PC-3 (cell line): ENCODE measurements at regions of chr1 and their contacts with region 1.

Region 1: DNA sequence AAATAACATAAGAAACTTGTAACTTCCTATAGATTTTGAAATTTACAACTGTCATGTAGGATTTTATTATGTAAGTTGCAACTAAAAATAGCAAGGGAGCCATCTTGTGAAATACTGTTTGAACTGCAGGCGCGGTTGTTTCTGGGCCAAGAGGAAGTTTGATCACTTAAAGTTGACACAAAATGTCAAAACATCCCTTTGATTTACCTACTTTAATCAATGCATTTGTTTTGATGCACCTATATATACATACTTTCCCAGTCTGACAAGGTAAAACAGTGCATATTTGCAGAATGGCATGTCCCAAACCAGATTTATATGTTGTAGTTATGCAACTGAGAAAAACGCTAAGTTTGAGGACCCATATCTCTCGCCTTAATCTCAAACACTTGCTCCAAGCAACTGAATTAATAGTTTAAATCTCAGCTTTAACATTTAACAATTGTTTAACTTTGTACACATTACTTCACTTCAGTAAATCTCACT is 63.8 kb downstream of the KCNK2 start:
- DNase-seq: peak; percentile 82
- ATAC-seq: peak; percentile 64
- H3K4me3 ChIP-seq: peak overlapping the region; percentile 5; the same call in 1 of the 2 replicates
- H3K27ac ChIP-seq: no peak overlapping the region
- H3K4me1 ChIP-seq: peaks cover 21% of the 10 kb centered on the region
- H3K27me3 ChIP-seq: no peaks in the 10 kb centered on the region
- CTCF ChIP-seq: peak; percentile 98

Region 2: DNA sequence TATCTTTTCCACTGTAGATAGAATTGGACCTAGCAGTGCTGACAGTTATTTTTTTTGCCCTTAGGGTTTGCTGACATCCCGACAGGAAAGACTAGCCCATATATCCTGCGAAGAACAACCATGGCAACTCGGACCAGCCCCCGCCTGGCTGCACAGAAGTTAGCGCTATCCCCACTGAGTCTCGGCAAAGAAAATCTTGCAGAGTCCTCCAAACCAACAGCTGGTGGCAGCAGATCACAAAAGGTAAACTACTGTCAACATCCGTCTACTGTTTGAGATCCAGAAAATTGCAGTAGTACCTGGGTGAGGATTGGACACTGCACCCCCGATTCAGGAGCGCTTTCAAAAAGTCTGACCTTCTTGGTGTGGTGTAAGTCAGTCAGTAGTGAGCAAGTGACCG is 487.6 kb before region 1 on chr1:
- CTCF ChIA-PET with region 1: interaction called, 4 read pairs
- POLR2A ChIA-PET with region 1: no interaction called
- intact Hi-C with region 1: loop called (anchors 1 kb)
- DNase-seq: peak; percentile 46
- ATAC-seq: peak; percentile 70
- H3K4me3 ChIP-seq: no peak overlapping the region
- H3K27ac ChIP-seq: no peak overlapping the region
- H3K4me1 ChIP-seq: no peaks in the 10 kb centered on the region
- H3K27me3 ChIP-seq: no peaks in the 10 kb centered on the region
- CTCF ChIP-seq: peak; percentile 65

Region 3: GRCh38 chr1:214901718-214902117 is 244.7 kb before region 1 on chr1:
- CTCF ChIA-PET with region 1: interaction called, 3 read pairs
- POLR2A ChIA-PET with region 1: no interaction called
- intact Hi-C with region 1: loop called (anchors 2 kb)
- DNase-seq: peak; percentile 99
- ATAC-seq: peak; percentile 85
- H3K4me3 ChIP-seq: peak overlapping the region; percentile 48
- H3K27ac ChIP-seq: peak overlapping the region; percentile 88
- H3K4me1 ChIP-seq: peaks cover 44% of the 10 kb centered on the region
- H3K27me3 ChIP-seq: no peaks in the 10 kb centered on the region
- CTCF ChIP-seq: no peak; the same call in 1 of the 2 replicates

Region 4: GRCh38 chr1:215076318-215076717 is 70.1 kb before region 1 on chr1:
- CTCF ChIA-PET with region 1: no interaction called
- POLR2A ChIA-PET with region 1: no interaction called
- intact Hi-C with region 1: loop called (anchors 5 kb)
- DNase-seq: peak; percentile 80
- ATAC-seq: peak; percentile 96
- H3K4me3 ChIP-seq: no peak overlapping the region
- H3K27ac ChIP-seq: no peak overlapping the region
- H3K4me1 ChIP-seq: no peaks in the 10 kb centered on the region
- H3K27me3 ChIP-seq: no peaks in the 10 kb centered on the region
- CTCF ChIP-seq: peak; percentile 91

Region 5: GRCh38 chr1:215114154-215114933 is 32.0 kb before region 1 on chr1:
- CTCF ChIA-PET with region 1: no interaction called
- POLR2A ChIA-PET with region 1: no interaction called
- intact Hi-C with region 1: no loop called
- DNase-seq: peak; percentile 98
- ATAC-seq: peak; percentile 84
- H3K4me3 ChIP-seq: peak overlapping the region; percentile 20; the same call in 1 of the 2 replicates
- H3K27ac ChIP-seq: peak overlapping the region; percentile 74
- H3K4me1 ChIP-seq: peaks cover 25% of the 10 kb centered on the region
- H3K27me3 ChIP-seq: no peaks in the 10 kb centered on the region
- CTCF ChIP-seq: no peak

Region 6: GRCh38 chr1:215526553-215527151 is 380.3 kb after region 1 on chr1:
- CTCF ChIA-PET with region 1: no interaction called
- POLR2A ChIA-PET with region 1: no interaction called
- intact Hi-C with region 1: loop called (anchors 1 kb)
- DNase-seq: peak; percentile 92
- ATAC-seq: peak; percentile 75
- H3K4me3 ChIP-seq: no peak overlapping the region
- H3K27ac ChIP-seq: no peak overlapping the region
- H3K4me1 ChIP-seq: no peaks in the 10 kb centered on the region
- H3K27me3 ChIP-seq: no peaks in the 10 kb centered on the region
- CTCF ChIP-seq: peak; percentile 95